Vagina (tissue), 2 donors: ENCODE measurements at regions of chr3 and their contacts with region 1.

Region 1: GRCh38 chr3:55897573-55898224 is 410.6 kb upstream of the WNT5A start:
- DNase-seq: no peak
- H3K4me3 ChIP-seq: no peak overlapping the region
- H3K27ac ChIP-seq: no peak overlapping the region
- H3K4me1 ChIP-seq: no peaks in the 10 kb centered on the region
- H3K27me3 ChIP-seq: no peaks in the 10 kb centered on the region
- CTCF ChIP-seq: no peak
- POLR2A ChIP-seq: no peak

Region 2: DNA sequence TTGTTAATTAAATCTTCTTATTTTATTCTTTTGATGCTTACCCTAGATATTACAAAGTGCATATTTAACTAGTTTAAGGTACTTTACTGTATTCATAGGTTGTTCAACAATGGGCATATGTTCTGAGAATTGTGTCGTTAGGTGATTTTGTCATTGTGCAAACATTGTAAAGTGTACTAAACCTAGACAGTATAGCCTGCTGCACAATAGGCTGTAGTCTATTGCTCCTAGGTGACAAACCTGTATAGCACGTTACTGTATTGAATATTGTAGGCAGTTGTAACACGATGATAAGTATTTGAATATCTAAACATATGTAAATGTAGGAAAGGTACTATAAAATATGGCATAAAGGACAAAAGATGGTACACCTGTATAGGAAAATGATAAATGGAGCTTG is 1674.6 kb before region 1 on chr3:
- intact Hi-C with region 1: loop called (anchors 5 kb)
- DNase-seq: no peak
- H3K4me3 ChIP-seq: no peak overlapping the region
- H3K27ac ChIP-seq: no peak overlapping the region
- H3K4me1 ChIP-seq: no peaks in the 10 kb centered on the region
- H3K27me3 ChIP-seq: no peaks in the 10 kb centered on the region
- CTCF ChIP-seq: no peak
- POLR2A ChIP-seq: no peak

Region 3: DNA sequence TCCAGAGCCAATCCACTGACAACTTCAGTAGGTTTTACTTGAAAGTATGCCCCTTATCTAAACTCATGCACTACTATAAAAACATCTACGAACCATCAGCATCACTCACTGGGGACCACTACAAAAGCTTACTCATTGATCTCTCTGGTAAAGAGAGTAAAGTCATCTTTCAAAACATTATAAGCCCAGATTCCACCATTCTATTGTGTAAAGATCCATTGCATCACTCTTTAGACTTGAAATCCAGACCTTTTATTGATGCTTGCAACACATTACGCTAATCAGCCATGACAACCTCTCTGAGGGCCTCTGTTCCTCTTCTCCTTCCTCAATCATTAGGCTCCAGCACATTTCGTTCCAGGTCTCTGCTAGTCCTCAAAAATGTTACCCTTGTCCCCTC is 161.7 kb before region 1 on chr3:
- intact Hi-C with region 1: no loop called
- DNase-seq: no peak
- H3K4me3 ChIP-seq: no peak overlapping the region
- H3K27ac ChIP-seq: no peak overlapping the region
- H3K4me1 ChIP-seq: no peaks in the 10 kb centered on the region
- H3K27me3 ChIP-seq: no peaks in the 10 kb centered on the region
- CTCF ChIP-seq: no peak
- POLR2A ChIP-seq: no peak

Region 4: DNA sequence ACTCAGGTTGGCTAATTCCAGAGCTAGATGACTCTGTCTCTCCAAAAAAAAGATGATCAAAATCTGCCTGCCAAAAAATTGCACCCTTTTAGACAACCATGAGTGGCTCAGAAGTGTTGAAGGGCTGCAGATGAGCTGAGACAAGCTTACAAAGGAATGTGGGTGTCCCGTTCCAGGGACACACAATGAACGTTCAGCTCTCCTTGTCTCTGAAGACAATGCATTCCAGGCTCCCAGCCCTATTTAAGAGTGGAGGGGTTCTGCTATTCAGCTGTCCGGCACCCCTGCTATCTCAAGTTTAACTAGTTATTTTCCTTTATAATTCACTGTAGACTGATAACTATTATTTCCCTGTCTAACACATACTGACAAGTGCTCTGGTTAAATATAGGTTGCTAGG is 55.5 kb before region 1 on chr3:
- intact Hi-C with region 1: no loop called
- DNase-seq: no peak
- H3K4me3 ChIP-seq: no peak overlapping the region
- H3K27ac ChIP-seq: no peak overlapping the region
- H3K4me1 ChIP-seq: no peaks in the 10 kb centered on the region
- H3K27me3 ChIP-seq: no peaks in the 10 kb centered on the region
- CTCF ChIP-seq: no peak
- POLR2A ChIP-seq: no peak